Right ventricle myocardium inferior (tissue), 1 donor: ENCODE measurements at regions of chr16 and their contacts with region 1.

Region 1: DNA sequence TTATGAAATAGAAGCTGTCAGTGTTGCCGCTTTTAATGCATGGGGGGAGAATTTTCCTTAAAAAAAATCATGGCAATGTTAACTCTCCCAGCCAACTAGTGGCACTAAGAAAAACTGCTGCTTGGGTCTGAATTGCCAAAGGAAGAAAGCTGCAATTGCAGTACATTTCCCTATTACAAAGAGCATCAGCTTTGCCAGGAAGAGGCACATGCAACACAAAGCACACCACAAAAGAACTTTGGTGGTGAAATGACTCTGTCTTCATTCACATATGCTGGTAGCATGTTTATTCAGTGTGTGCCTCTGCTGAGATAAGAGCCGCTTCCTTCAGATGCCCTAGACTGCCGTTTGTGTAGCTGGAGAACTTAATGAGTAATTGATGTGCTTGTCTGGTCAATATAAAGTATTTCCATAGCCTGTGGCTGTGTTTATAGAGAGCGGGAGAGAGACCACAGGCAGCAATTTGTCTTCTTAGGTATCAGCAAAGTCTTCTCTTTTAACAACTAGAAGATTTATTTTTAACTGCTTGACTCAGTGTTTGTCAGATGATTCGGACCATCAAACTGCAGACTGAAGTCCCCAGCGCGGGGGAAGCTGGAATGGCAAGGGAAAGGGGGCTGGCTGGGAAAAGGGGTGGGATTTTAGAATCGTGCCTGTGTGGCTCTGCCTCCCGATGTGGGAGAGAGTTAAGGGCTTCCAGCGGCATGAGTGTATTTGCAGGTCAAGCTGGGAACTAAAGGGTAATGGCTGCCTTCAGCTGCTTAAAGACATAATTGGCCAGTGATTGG is 115.1 kb downstream of the MRTFB start:
- DNase-seq: no peak
- ATAC-seq: peak; percentile 63

Region 2: GRCh38 chr16:13935408-13935807 is 250.8 kb before region 1 on chr16:
- intact Hi-C with region 1: loop called (anchors 5 kb)
- DNase-seq: no peak
- ATAC-seq: no peak

Region 3: GRCh38 chr16:14003074-14003570 is 183.1 kb before region 1 on chr16:
- intact Hi-C with region 1: loop called (anchors 5 kb)
- DNase-seq: peak; percentile 75
- ATAC-seq: peak; percentile 56

Region 4: DNA sequence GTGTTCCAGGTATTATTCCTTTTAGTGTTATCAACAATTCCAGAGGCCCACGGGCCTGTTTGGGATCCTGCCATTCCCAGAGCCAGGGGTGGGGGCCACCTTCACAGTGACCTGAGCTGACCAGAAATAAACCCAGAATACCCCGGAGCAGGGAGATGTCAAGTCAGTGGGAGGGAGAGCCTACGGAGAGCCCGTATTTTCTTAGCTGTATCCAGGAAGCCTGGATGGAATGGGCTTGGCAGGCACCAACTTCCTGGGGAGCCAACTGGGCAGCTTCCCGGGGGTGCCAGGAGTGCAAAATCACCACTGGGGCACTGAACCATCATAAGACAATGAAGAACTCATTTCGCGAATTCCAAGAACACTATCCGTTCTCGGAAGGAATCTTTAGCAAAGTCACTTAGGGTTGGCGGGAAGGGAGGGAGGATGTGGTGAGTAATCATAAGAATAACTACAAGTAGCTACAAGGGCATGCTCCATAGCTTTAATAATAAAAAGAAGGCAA is 128.3 kb before region 1 on chr16:
- intact Hi-C with region 1: no loop called
- DNase-seq: no peak
- ATAC-seq: no peak

Region 5: DNA sequence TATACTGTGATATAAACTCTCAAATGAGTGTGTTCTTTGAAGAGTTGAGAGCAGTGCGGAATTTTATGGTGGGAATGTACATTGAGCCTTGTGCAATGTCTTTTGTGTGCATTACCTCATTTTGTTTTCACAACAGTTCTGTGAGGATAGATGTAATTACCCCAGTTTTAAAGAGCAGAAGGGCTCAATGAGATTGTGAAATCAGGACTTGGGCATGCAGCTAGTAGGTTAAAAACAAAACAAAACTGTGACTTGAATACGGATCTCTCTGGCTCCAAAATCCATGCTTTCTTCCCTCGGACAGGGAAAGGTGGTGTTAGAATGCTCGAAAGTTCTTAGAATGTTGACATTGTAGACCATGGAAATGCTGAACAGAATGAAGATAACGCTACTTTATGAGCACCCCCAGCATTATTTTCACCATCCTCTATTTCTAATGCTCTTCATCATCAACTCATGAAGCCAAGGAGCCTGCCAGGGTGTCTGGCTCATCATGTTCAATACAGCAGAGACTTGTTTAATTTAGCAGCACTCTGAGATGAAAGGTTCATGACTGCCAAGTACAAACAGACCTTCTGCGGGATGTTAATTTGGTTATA is 97.9 kb before region 1 on chr16:
- intact Hi-C with region 1: loop called (anchors 5 kb)
- DNase-seq: no peak
- ATAC-seq: peak; percentile 75

Region 6: DNA sequence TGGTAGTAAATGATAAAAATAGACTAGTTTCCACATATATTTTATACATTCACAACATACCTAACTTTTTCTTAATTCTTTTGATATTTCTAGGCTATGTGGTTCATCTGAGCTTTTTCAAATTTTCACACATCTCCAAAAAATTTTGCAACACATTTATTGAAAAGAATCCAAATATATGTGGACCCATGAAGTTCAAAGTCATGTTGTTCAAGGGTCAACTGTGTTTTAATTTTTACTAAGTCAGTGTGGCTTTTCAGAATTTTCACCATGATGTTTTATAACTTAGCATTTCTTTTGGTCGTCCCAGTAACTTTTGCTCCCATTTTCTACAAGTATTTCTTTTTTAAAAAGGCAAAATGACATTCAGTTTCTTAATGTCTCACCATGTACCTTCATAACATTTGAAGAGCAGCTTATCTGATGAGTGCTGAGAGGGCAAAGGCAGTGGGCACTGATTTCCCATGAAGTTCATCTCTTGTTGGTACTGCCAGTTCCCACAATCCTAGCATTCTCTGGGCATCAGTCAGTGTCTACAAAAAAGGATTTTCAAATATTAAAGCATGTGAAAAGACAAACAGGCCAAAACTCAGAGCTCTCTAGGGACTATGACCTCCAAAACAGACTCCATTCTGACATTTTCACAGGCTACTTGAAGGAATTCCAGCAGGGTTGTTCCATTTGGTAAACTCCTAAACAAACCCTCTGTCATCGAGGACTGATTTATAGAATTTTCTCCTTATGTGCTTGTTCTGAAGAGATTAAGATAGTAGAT is 34.8 kb before region 1 on chr16:
- intact Hi-C with region 1: loop called (anchors 5 kb)
- DNase-seq: no peak
- ATAC-seq: peak; percentile 62